Mammary epithelial cell (primary cell): ENCODE measurements at regions of chr6 and their contacts with region 1.

Region 1: GRCh38 chr6:1335367-1336037 is 23.6 kb downstream of the FOXQ1 start:
- DNase-seq: peak; percentile 97
- H3K4me3 ChIP-seq: no peak overlapping the region
- H3K27ac ChIP-seq: peak overlapping the region; percentile 79
- H3K4me1 ChIP-seq: peaks cover 18% of the 10 kb centered on the region
- H3K27me3 ChIP-seq: no peaks in the 10 kb centered on the region
- CTCF ChIP-seq: peak in 1 of 2 donors; percentile 1

Region 2: DNA sequence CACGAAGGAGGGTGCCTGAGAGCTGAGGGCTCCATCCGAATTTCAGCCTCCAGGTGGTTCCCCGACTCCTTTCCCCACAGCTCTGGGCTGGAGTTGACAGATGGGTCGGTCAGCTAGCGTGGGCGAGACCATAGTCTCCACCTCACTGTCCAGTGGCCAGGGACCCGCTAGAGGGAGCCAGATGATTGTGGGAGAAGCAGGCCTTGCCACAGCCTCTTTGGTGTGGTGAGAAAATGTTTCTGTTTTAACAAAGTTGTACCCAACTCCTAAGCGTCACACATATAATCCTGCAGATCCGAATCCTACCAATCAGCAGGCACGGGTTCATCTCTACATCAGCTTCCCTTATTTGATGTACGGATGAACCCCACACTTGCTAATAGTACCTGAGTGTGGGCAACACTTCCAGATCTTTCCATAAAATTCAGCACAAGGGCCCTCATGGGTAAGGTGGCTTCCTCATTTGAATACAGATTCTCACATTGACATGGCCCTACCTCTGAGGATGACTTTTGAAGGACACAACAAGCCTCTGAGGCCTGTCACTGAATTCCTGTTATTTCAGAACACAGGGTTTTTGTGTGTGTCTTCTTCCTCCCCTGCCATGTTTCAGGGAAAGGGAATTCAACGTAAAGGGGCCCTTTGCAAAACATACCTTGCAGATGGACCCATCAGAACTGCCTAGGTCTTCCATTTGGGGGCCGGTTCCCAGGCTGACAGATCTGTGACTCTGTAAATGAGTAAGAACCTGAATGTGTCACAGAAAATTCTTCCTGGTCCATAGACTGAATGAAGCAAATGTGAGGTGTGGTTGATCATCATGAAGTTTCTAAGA is 1146.5 kb before region 1 on chr6:
- CTCF ChIA-PET with region 1: interaction called, 5 read pairs
- dilution Hi-C with region 1: no loop called
- in situ Hi-C with region 1: no loop called
- intact Hi-C with region 1: loop called (anchors 1 kb)
- DNase-seq: peak; percentile 74
- H3K4me3 ChIP-seq: no peak overlapping the region
- H3K27ac ChIP-seq: no peak overlapping the region
- H3K4me1 ChIP-seq: no peaks in the 10 kb centered on the region
- H3K27me3 ChIP-seq: no peaks in the 10 kb centered on the region
- CTCF ChIP-seq: peak; percentile 75 to 97

Region 3: GRCh38 chr6:722077-722524 is 613.4 kb before region 1 on chr6:
- CTCF ChIA-PET with region 1: no interaction called
- dilution Hi-C with region 1: no loop called
- in situ Hi-C with region 1: no loop called
- intact Hi-C with region 1: loop called (anchors 1 kb)
- DNase-seq: peak; percentile 65
- H3K4me3 ChIP-seq: no peak overlapping the region
- H3K27ac ChIP-seq: no peak overlapping the region
- H3K4me1 ChIP-seq: no peaks in the 10 kb centered on the region
- H3K27me3 ChIP-seq: no peaks in the 10 kb centered on the region
- CTCF ChIP-seq: peak; percentile 94 to 95

Region 4: GRCh38 chr6:912871-913835 is 422.3 kb before region 1 on chr6:
- CTCF ChIA-PET with region 1: interaction called, 3 read pairs
- dilution Hi-C with region 1: no loop called
- in situ Hi-C with region 1: loop called in 1 of 2 experiments (anchors 5 kb)
- intact Hi-C with region 1: loop called (anchors 1 kb)
- DNase-seq: peak; percentile 7
- H3K4me3 ChIP-seq: no peak overlapping the region
- H3K27ac ChIP-seq: no peak overlapping the region
- H3K4me1 ChIP-seq: no peaks in the 10 kb centered on the region
- H3K27me3 ChIP-seq: no peaks in the 10 kb centered on the region
- CTCF ChIP-seq: peak; percentile 60 to 81

Region 5: GRCh38 chr6:1136415-1136774 is 199.1 kb before region 1 on chr6:
- CTCF ChIA-PET with region 1: no interaction called
- dilution Hi-C with region 1: no loop called
- in situ Hi-C with region 1: no loop called
- intact Hi-C with region 1: loop called (anchors 5 kb)
- DNase-seq: peak; percentile 81
- H3K4me3 ChIP-seq: peak overlapping the region in 2 of 3 experiments; percentile 10 to 13
- H3K27ac ChIP-seq: peak overlapping the region; percentile 58
- H3K4me1 ChIP-seq: peaks cover 26% of the 10 kb centered on the region
- H3K27me3 ChIP-seq: no peaks in the 10 kb centered on the region
- CTCF ChIP-seq: no peak

Region 6: GRCh38 chr6:1263039-1263849 is 72.3 kb before region 1 on chr6:
- CTCF ChIA-PET with region 1: no interaction called
- dilution Hi-C with region 1: no loop called
- in situ Hi-C with region 1: no loop called
- intact Hi-C with region 1: loop called (anchors 1 kb)
- DNase-seq: no peak
- H3K4me3 ChIP-seq: no peak overlapping the region
- H3K27ac ChIP-seq: no peak overlapping the region
- H3K4me1 ChIP-seq: no peaks in the 10 kb centered on the region
- H3K27me3 ChIP-seq: no peaks in the 10 kb centered on the region
- CTCF ChIP-seq: peak in 1 of 2 donors; percentile 7

Region 7: DNA sequence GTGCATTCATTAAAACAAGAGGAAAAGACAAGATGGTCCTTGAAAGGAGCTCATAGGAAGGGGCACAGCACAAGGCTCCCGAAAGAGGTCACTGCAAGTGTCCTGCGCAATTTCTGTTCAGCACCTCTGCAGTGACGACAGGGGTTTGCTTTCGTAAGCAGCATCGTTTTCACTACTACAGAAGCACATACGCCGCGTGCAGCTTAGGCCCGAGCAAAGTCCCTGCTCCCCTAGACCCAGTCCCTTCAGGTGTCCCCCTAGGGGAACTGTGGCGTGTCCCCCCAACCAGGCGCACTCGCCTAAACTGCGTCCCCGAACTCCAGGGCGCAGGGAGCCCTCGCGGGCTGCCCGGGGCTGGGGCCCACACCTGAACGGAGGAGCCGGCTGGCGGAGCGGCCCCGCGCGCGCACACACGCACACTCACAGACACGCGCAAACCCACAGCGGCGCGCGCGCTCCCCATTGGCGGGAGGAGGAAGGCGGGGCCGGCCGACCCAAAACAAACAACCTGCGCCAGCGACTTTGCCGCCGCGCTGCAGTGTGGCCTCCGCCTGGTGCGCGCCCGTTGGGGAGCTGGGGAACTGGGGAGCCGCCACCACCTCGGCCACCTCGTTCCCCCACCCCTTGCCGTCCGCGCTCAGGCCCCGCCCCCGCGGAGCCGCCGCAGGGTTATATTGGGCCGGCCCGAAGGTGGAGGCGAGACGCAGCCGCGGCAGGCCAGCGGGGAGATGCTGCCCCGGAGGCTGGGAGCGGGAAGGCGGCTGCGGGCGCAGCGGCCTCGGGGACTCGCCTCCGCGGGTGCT is 23.9 kb before region 1 on chr6 and contains the start of gene FOXQ1:
- CTCF ChIA-PET with region 1: no interaction called
- dilution Hi-C with region 1: no loop called
- in situ Hi-C with region 1: no loop called
- intact Hi-C with region 1: loop called (anchors 1 kb)
- DNase-seq: peak; percentile 74
- H3K4me3 ChIP-seq: peak within 1 kb of the TSS; percentile 60 to 74 (median 65)
- H3K27ac ChIP-seq: peak within 1 kb of the TSS; percentile 61
- H3K4me1 ChIP-seq: peaks cover 34% of the 10 kb centered on the region
- H3K27me3 ChIP-seq: no peaks in the 10 kb centered on the region
- CTCF ChIP-seq: peak in 1 of 2 donors; percentile 6
- total RNA-seq, gene FOXQ1: 0.92 TPM in 1 of 2 donors, not detected in the other

Region 8: GRCh38 chr6:1436334-1437306 is 101.1 kb after region 1 on chr6:
- CTCF ChIA-PET with region 1: no interaction called
- dilution Hi-C with region 1: no loop called
- in situ Hi-C with region 1: no loop called
- intact Hi-C with region 1: no loop called
- DNase-seq: peak; percentile 62
- H3K4me3 ChIP-seq: no peak overlapping the region
- H3K27ac ChIP-seq: no peak overlapping the region
- H3K4me1 ChIP-seq: peaks cover 6% of the 10 kb centered on the region
- H3K27me3 ChIP-seq: no peaks in the 10 kb centered on the region
- CTCF ChIP-seq: peak; percentile 72